GM18951 (cell line): ENCODE measurements at regions of chr1 and their contacts with region 1.

Region 1: GRCh38 chr1:40079774-40080400 is 17.2 kb downstream of the PPT1 start:
- POLR2A ChIP-seq: no peak

Region 2: GRCh38 chr1:40338745-40339424 is 259.0 kb after region 1 on chr1:
- in situ Hi-C with region 1: loop called (anchors 10 kb)
- POLR2A ChIP-seq: no peak

Region 3: DNA sequence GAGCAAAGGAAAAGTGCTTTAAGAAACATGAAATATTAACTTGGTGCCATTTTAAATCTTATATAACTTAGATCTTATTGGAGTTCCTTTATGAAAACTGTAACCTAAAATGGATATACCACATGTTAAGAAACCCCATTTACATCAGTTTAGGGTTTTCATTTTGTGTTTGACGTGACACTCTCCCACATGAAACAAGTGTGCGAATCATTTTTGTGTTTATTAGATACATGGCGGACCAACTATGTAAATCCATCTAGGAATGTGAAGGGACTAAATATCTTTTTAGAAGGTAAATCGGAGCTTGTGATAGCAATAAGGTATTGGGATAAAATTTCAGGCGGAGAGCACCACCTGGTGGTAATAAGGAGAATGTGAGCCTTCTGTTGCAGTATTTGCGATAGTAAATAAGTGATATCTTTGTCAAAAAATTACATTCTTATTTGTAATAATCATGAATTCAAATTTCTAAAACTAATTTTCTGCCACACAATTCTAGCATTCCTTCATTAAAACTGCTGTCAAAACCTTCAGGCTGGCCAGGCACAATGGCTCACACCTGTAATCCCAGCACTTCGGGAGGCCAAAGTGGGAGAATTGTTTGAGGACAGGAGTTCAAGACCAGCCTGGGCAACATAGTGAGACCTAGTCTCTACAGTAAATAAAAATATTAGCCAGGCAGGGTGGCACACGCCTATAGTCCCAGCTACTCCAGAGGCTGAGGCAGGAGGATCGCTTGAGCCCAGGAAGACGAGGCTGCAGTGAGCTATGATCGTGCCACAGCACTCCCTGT is 325.0 kb after region 1 on chr1:
- in situ Hi-C with region 1: loop called (anchors 10 kb)
- POLR2A ChIP-seq: no peak